ENCODE measurements at regions of chr2 and their contacts with region 1.

Region 1: DNA sequence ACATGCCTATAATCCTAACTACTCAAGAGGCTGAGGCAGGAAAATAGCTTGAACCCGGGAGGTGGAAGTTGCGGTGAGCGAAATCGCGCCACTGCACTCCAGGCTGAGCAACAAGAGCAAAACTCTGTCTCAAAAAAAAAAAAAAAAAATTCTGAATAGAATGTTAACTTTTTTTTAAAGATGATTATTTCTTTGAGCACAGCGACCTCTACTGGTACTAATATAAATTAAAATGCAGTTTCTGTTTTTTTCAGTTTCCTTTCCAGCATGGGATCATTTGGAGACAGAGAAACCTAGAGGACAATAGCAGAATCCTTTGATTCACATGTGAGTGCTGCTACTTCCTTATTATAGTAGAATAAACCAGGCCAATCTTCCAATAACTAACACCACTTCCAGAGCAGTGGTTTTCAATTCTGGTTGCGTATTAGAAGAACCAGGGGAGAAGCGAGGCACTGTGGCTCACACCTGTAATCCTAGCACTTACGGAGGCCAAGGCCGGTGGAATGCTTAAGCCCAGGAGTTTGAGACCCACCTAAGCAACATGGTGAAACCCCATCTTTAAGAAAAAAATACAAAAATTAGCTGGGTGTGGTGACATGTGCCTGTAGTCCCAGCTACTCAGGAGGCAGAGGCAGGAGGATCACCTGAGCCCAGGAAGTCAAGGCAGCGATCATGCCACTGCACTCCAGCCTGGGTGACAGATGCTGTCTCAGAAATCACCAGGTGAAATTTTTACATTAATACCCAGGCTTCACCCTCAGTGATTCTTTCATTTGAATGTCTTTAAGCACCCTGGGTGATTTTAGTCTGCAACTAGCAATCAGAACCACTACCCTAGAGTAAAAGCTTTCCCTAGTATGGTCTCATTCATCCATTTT is 10.1 kb downstream of the SRSF7 start:
- DNase-seq: peak; percentile 80
- H3K4me3 ChIP-seq: no peak overlapping the region
- H3K27ac ChIP-seq: no peak overlapping the region
- H3K4me1 ChIP-seq: peaks cover 46% of the 10 kb centered on the region
- H3K27me3 ChIP-seq: no peaks in the 10 kb centered on the region
- CTCF ChIP-seq: peak; percentile 62

Region 2: GRCh38 chr2:38722271-38723061 is 18.6 kb before region 1 on chr2:
- CTCF ChIA-PET with region 1: no interaction called
- POLR2A ChIA-PET with region 1: interaction called, 11 read pairs
- intact Hi-C with region 1: no loop called
- DNase-seq: no peak
- H3K4me3 ChIP-seq: no peak overlapping the region
- H3K27ac ChIP-seq: no peak overlapping the region
- H3K4me1 ChIP-seq: no peaks in the 10 kb centered on the region
- H3K27me3 ChIP-seq: no peaks in the 10 kb centered on the region
- CTCF ChIP-seq: no peak

Region 3: DNA sequence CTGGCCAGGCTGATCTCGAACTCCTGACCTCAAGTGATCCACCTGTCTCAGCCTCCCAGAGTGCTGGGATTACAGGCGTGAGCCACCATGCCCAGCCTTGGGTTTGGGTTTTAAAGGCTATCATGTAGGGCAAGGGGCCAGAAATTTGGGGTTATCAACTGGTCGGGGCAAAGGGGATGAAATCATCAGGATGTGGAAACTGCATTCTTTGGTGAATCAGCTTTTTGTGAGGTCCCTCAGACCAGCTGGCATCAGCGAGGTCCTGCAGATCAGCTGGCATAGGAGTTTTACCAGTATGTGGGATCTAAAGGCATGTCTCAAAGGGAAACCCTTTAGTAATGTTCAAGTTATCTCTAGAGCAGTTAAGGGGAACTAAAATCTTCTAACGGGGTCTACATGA is 30.5 kb after region 1 on chr2:
- CTCF ChIA-PET with region 1: no interaction called
- POLR2A ChIA-PET with region 1: no interaction called
- intact Hi-C with region 1: loop called (anchors 1 kb)
- DNase-seq: peak; percentile 10
- H3K4me3 ChIP-seq: no peak overlapping the region
- H3K27ac ChIP-seq: no peak overlapping the region
- H3K4me1 ChIP-seq: peaks cover 18% of the 10 kb centered on the region
- H3K27me3 ChIP-seq: no peaks in the 10 kb centered on the region
- CTCF ChIP-seq: no peak

Region 4: GRCh38 chr2:38960609-38961320 is 219.7 kb after region 1 on chr2:
- CTCF ChIA-PET with region 1: no interaction called
- POLR2A ChIA-PET with region 1: no interaction called
- intact Hi-C with region 1: no loop called
- DNase-seq: no peak
- H3K4me3 ChIP-seq: no peak overlapping the region
- H3K27ac ChIP-seq: no peak overlapping the region
- H3K4me1 ChIP-seq: peaks cover 3% of the 10 kb centered on the region
- H3K27me3 ChIP-seq: no peaks in the 10 kb centered on the region
- CTCF ChIP-seq: no peak

Region 5: DNA sequence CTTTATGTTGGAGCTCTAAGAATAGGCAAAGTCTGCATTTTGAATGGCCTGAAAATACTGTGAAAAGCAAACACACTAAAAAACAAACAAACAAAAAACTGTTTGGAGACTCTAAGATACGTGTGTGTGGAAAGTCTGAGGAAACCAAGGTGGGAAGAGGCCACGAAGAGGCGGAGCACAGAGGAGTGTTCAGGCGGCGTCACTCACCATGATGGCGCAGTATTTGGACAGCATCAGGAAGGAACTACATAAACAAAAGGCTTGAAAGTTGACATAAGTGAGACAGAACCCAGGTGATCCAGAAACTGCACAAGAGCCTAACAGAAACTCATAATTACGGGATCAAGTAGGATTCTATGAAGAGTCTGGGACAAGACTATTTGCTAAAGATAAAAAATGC is 430.5 kb after region 1 on chr2:
- CTCF ChIA-PET with region 1: no interaction called
- POLR2A ChIA-PET with region 1: no interaction called
- intact Hi-C with region 1: no loop called
- DNase-seq: no peak
- H3K4me3 ChIP-seq: no peak overlapping the region
- H3K27ac ChIP-seq: no peak overlapping the region
- H3K4me1 ChIP-seq: no peaks in the 10 kb centered on the region
- H3K27me3 ChIP-seq: no peaks in the 10 kb centered on the region
- CTCF ChIP-seq: no peak

Region 6: GRCh38 chr2:39469807-39470206 is 728.7 kb after region 1 on chr2:
- CTCF ChIA-PET with region 1: no interaction called
- POLR2A ChIA-PET with region 1: no interaction called
- intact Hi-C with region 1: no loop called
- DNase-seq: no peak
- H3K4me3 ChIP-seq: no peak overlapping the region
- H3K27ac ChIP-seq: no peak overlapping the region
- H3K4me1 ChIP-seq: no peaks in the 10 kb centered on the region
- H3K27me3 ChIP-seq: no peaks in the 10 kb centered on the region
- CTCF ChIP-seq: no peak

Measured in A673 (cell line).